Aorta (tissue), 5 donors: ENCODE measurements at regions of chr18 and their contacts with region 1.

Region 1: DNA sequence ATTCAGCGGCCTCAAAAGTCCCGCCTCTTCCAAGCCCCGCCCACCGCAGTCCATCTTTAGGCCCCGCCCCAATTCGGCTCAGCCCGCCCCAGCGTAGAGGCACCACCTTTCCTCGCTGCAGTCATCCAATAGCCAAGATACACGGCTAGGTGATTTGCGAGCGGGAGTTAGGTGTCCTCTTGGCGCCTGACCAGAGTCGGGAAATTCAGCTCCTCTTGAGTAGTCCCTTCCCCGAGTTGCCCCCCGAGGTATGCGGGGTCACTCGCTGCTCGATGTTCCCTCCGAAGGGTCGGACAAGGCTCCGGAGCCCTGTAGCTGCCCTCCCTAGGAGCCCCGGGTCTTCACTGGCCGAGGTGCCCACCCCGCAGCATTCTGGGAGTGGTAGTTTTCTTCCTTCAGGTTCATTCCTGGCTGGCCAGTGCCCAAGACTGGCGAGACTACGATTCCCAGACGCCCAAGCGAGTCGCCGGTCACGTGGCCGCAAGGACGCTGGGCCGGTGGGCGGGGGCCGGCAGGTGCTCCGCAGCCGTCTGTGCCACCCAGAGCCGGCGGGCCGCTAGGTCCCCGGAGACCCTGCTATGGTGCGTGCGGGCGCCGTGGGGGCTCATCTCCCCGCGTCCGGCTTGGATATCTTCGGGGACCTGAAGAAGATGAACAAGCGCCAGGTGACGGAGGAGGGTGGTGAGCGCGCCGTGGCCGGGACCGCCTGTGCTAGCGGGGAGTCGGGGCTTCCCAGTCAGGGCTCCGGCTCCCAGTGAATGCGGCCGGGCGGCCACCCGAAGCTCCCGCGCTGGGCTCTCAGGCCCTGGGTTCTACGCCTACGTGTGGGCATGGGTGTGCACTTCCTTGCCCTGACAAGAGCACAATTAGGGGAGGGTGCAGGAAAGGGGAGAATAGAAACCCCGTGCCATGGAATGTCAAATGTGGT is at the start of gene SEC11C:
- DNase-seq: peak; percentile 98
- ATAC-seq: peak; percentile 97
- H3K4me3 ChIP-seq: peak within 1 kb of the TSS; percentile 61 to 64
- H3K27ac ChIP-seq: peak within 1 kb of the TSS in 1 of 2 donors; percentile 49
- H3K4me1 ChIP-seq: peaks cover 0 to 3% of the 10 kb centered on the region in 2 donors
- H3K27me3 ChIP-seq: no peaks in the 10 kb centered on the region
- total RNA-seq, gene SEC11C: 31.8 to 38.1 TPM

Region 2: DNA sequence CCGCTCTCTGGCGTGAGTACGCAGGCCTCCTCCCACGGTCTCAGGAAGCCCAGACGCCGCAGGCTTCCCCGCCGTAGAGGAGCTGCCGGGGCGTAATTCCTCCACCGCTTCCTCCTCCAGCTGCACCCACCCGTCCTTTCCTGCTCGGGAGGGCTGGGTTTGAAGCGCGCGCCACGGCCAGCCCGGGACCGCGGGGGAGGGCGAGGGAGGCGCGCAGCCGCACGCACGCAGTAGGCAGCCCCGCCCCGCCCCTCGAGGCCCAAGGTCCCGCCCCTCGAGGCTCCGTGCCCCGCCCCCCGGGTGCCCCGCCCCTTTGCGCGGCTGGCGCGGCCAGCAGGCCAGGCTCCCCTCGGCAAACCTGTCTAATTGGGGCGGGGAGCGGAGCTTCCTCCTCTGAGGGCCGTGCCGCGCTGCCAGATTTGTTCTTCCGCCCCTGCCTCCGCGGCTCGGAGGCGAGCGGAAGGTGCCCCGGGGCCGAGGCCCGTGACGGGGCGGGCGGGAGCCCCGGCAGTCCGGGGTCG is 468.5 kb before region 1 on chr18 and contains the start of gene MALT1:
- intact Hi-C with region 1: loop called in 1 of 2 experiments (anchors 10 kb)
- DNase-seq: peak; percentile 95 to 97
- ATAC-seq: peak; percentile 98
- H3K4me3 ChIP-seq: peak within 1 kb of the TSS; percentile 77 to 98
- H3K27ac ChIP-seq: peak within 1 kb of the TSS in 1 of 2 donors; percentile 41
- H3K4me1 ChIP-seq: no peaks in the 10 kb centered on the region
- H3K27me3 ChIP-seq: no peaks in the 10 kb centered on the region
- total RNA-seq, gene MALT1: 21.5 to 27.4 TPM

Region 3: GRCh38 chr18:58768293-58768974 is 371.2 kb before region 1 on chr18:
- intact Hi-C with region 1: loop called in 1 of 2 experiments (anchors 5 kb)
- DNase-seq: peak; percentile 80 to 94
- ATAC-seq: peak; percentile 94
- H3K4me3 ChIP-seq: no peak overlapping the region
- H3K27ac ChIP-seq: no peak overlapping the region
- H3K4me1 ChIP-seq: no peaks in the 10 kb centered on the region
- H3K27me3 ChIP-seq: no peaks in the 10 kb centered on the region

Region 4: DNA sequence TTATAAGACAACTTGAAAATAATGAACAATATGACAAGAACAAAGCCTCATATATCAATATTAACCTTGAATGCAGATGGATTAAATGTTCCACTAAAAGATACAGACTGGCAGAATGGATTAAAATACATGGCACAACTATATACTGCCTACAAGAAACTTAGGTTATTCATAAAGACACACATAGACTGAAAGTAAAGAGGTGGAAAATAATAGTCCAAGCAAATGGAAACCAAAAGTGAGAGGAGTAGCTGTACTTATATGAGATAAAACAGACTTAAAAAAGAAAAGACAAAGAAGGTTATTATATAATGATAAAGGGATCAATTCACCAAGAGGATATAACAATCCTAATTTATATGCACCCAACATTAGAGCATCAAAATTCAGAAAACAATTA is 201.2 kb after region 1 on chr18:
- intact Hi-C with region 1: no loop called
- DNase-seq: no peak
- ATAC-seq: no peak
- H3K4me3 ChIP-seq: no peak overlapping the region
- H3K27ac ChIP-seq: no peak overlapping the region
- H3K4me1 ChIP-seq: no peaks in the 10 kb centered on the region
- H3K27me3 ChIP-seq: no peaks in the 10 kb centered on the region